ENCODE measurements at regions of chr6 and their contacts with region 1.

Region 1: GRCh38 chr6:20737912-20738311 is 203.7 kb downstream of the CDKAL1 start:
- DNase-seq: no peak
- H3K4me3 ChIP-seq: no peak overlapping the region
- H3K27ac ChIP-seq: no peak overlapping the region
- H3K4me1 ChIP-seq: no peaks in the 10 kb centered on the region
- H3K27me3 ChIP-seq: no peaks in the 10 kb centered on the region
- CTCF ChIP-seq: no peak

Region 2: GRCh38 chr6:20789162-20789561 is 51.2 kb after region 1 on chr6:
- CTCF ChIA-PET with region 1: no interaction called
- dilution Hi-C with region 1: loop called (anchors 5 kb)
- in situ Hi-C with region 1: no loop called
- intact Hi-C with region 1: no loop called
- DNase-seq: no peak
- H3K4me3 ChIP-seq: no peak overlapping the region
- H3K27ac ChIP-seq: no peak overlapping the region
- H3K4me1 ChIP-seq: no peaks in the 10 kb centered on the region
- H3K27me3 ChIP-seq: no peaks in the 10 kb centered on the region
- CTCF ChIP-seq: peak in 1 of 2 donors; percentile 44

Measured in mammary epithelial cell (primary cell).